AG04449 (cell line): ENCODE measurements at regions of chr7 and their contacts with region 1.

Region 1: DNA sequence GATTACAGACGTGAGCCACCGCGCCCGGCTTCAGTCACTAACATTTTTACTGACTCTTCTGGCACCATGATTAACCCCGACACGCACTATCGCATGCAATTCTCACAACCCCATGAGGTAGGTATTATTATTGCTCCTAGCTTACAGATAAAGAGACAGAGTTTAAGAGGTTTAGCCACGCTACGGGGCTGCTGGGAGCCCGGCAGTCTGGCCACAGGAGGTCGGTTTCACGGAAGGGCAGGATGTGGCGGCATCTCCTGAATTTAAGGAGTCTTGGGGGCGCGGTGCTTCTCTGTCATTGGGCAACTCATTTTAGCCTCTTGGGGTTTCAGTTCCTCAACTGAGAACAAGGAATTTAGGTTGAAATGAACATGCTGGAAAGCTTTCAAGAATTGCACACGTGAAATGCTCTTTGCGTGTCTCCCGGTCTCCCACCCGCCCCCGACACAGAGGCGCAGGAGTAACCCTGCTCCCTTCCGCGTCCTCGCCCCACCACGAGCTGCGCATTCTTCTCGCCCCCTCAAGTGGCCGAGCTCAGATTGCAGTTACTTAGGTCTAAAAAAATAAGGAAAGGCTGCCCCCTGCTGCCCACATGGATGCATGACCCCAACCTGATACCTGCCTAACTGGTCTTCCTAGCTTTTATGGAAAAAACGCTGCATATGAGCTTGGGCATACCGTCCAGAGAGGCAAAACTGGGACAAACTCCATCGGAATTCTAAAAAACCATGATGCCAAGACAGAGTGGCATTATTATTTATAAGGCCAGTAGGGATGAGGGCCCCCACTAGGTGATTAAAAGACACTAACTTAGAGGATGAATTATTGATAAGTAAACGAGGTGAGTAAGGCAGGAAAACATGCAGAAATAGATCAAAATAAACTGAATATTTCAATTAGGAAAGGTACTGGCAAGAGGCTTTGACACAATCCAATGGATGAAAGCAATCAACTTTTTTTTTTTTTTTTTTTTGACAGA is 12.4 kb downstream of the PRSS2 start:
- DNase-seq: peak; percentile 62
- H3K4me3 ChIP-seq: peak overlapping the region; percentile 44
- CTCF ChIP-seq: peak; percentile 93

Region 2: DNA sequence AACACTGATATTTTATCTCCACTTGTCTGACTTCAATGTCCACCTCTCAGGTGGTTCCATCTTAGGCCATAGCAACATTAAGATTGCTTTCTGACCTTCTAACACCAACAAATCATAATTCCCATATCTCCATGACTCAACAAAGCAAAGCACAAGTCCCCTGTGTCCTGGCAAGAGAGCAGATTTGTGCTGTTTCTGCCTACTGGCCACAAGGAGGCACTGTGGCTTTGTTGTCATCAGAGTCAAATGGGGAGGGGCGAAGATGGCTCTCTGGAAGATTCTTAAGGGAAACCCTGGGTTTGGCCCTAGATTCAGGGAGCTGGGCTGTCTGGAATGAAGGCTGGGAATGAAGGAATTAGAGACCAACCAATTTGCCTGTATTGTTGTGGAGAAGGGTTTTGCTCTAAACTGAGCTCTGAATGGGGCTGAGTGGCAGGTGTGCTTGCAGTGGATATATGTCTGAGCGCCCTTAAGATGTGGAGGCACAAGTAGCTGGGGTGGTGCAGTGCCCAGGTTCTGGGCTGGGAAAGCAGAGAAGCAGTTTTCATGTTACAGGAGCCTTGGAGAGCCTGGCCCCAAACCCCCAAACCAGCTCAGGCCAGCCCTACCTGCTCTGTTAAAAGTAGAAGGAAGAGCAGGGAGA is 370.5 kb before region 1 on chr7:
- CTCF ChIA-PET with region 1: interaction called, 12 read pairs
- POLR2A ChIA-PET with region 1: no interaction called
- DNase-seq: peak; percentile 16
- H3K4me3 ChIP-seq: no peak overlapping the region
- CTCF ChIP-seq: peak; percentile 84

Region 3: GRCh38 chr7:142485617-142486226 is 297.5 kb before region 1 on chr7:
- CTCF ChIA-PET with region 1: interaction called, 17 read pairs
- POLR2A ChIA-PET with region 1: no interaction called
- DNase-seq: no peak
- H3K4me3 ChIP-seq: no peak overlapping the region
- CTCF ChIP-seq: peak; percentile 46

Region 4: DNA sequence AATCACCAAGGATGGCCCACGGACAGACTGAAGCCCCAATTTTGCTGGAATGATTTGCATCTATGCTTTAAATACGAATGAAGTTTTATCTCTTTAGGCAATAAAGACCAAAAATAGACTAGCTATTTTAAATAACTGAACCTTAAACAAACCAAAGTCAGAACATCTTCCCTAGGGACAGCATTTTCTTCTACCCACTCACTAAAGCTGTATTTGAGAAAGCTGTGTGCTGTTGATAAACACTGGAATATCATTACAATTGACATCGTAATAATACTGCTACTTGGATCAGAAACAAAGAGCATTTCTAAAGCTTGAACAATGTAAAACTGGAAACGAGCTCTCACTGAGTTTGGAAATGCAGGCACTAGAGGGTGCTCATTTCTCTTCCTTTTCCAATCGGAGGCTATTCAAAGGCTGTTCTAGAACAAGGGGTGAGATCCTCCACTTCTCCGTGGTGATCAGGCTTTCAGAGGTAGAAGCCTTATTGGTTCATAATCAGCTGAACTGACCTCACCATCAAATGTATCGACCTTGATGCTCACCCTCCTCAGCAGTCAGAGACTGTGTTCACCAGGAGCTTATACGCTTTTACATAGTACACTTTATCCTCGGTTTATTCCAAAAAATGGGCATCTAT is 259.3 kb before region 1 on chr7:
- CTCF ChIA-PET with region 1: interaction called, 103 read pairs
- POLR2A ChIA-PET with region 1: no interaction called
- DNase-seq: no peak
- H3K4me3 ChIP-seq: no peak overlapping the region
- CTCF ChIP-seq: no peak

Region 5: DNA sequence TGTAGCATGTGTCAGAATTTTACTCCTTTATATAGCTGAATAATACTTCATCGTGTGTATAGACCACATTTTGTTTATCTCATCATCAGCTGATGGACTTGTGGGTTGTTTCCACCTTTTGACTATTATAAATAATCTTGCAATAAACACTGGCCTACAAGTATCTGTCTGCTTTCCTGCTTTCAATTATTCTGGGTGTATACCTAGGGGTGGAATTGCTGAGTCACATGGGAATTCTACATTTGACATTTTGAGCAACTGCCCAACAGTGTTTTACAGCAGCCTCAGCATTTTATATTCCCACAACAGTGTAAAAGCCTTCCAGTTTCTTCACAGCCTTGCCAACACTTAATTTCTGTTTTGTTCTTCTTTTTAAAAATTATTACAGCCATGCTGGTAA is 234.2 kb before region 1 on chr7:
- CTCF ChIA-PET with region 1: no interaction called
- POLR2A ChIA-PET with region 1: no interaction called
- DNase-seq: no peak
- H3K4me3 ChIP-seq: no peak overlapping the region
- CTCF ChIP-seq: no peak

Region 6: GRCh38 chr7:142598297-142598696 is 184.9 kb before region 1 on chr7:
- CTCF ChIA-PET with region 1: interaction called, 167 read pairs
- POLR2A ChIA-PET with region 1: no interaction called
- DNase-seq: no peak
- H3K4me3 ChIP-seq: no peak overlapping the region
- CTCF ChIP-seq: no peak

Region 7: GRCh38 chr7:142642316-142642715 is 140.9 kb before region 1 on chr7:
- CTCF ChIA-PET with region 1: interaction called, 13 read pairs
- POLR2A ChIA-PET with region 1: no interaction called
- DNase-seq: no peak
- H3K4me3 ChIP-seq: no peak overlapping the region
- CTCF ChIP-seq: no peak

Region 8: GRCh38 chr7:142771353-142771723 is 11.9 kb before region 1 on chr7:
- CTCF ChIA-PET with region 1: interaction called, 17 read pairs
- POLR2A ChIA-PET with region 1: no interaction called
- DNase-seq: no peak
- H3K4me3 ChIP-seq: no peak overlapping the region
- CTCF ChIP-seq: no peak

Region 9: DNA sequence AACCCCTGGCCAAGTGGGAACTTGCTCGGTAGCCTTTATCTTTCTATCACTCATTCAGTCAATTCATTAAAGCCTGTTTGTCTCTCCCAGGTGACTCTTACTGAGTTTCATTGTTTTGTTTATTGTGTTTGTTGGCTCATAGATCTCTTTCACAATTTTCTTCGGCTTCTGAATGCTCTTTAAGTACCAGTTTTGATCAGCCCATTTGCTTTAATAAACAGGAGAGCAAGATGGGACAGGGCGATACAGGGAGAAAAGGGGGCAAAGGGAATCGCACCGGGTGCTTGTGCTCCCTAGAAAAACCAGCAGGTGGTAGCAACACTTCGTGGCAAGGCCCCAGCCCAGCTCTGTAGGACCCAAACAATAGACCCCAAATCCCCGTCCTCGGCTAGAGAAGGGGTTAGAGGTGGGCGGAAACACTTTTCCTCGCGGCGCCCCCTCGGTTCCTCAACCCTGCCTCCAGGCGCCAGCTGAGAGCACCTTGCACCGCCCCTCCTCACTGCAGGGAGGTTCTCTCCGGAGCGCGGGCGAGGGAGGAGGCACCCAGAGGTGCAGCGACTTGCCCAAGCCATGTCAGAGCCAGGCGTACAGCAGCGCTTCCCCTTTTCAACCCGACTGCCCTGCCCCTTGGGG is 70.6 kb after region 1 on chr7:
- CTCF ChIA-PET with region 1: no interaction called
- POLR2A ChIA-PET with region 1: no interaction called
- DNase-seq: no peak
- H3K4me3 ChIP-seq: peak overlapping the region; percentile 72
- CTCF ChIP-seq: peak; percentile 70